Activated CD4-positive, alpha-beta T cell treated with anti-CD3 and anti-CD28 coated beads, Interleukin-2, amount 10 ng/mL, durations not matched to agents 24 days and 14 days (primary cell): ENCODE measurements at regions of chr17 and their contacts with region 1.

Region 1: GRCh38 chr17:65181237-65182061 is 44.3 kb downstream of the RGS9 start:
- DNase-seq: peak; percentile 82
- H3K4me3 Mint-ChIP-seq: peak overlapping the region; percentile 54
- H3K27ac Mint-ChIP-seq: peak overlapping the region; percentile 87
- H3K4me1 Mint-ChIP-seq: peaks cover 73% of the 10 kb centered on the region
- H3K27me3 Mint-ChIP-seq: no peaks in the 10 kb centered on the region

Region 2: DNA sequence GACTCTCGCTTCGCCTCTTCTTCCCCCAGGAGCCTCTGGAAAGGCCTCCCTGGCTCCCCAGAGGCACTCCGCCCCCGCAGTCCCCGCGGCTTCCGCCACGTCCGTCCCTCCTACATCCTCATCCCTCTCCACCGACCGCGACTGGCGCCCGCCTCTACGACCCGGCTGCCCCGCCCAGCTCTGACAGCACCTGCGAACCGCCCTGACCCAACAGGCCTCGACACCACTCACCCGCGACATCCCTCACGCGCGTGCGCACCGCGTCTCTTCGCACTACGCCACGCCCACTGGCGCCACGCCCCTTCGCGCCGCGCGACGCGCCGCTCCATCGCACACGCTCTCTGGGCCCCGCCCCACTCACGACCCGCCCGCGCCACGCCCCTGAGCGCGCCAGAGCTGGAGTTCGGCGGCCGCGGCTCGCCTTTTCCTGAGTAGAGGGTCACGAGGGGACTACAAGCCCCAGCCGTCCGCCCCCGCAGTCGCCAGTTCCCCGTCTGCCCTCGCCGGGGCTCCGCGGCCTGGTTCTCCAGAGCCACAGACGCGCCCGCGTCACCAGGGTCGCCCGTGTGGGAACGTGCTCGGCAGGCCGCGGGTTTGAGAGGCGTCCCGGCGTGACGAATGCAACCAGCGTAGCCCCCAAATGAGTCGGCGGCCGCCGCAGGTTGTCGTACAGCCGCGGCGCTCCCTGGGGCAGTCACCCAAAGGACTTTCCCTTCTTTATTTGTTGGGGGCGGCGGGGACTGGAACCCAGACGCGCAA is 205.9 kb before region 1 on chr17:
- intact Hi-C with region 1: loop called (anchors 2 kb)
- DNase-seq: peak; percentile 100
- H3K4me3 Mint-ChIP-seq: peak overlapping the region; percentile 76
- H3K27ac Mint-ChIP-seq: peak overlapping the region; percentile 93
- H3K4me1 Mint-ChIP-seq: peaks cover 47% of the 10 kb centered on the region
- H3K27me3 Mint-ChIP-seq: no peaks in the 10 kb centered on the region

Region 3: DNA sequence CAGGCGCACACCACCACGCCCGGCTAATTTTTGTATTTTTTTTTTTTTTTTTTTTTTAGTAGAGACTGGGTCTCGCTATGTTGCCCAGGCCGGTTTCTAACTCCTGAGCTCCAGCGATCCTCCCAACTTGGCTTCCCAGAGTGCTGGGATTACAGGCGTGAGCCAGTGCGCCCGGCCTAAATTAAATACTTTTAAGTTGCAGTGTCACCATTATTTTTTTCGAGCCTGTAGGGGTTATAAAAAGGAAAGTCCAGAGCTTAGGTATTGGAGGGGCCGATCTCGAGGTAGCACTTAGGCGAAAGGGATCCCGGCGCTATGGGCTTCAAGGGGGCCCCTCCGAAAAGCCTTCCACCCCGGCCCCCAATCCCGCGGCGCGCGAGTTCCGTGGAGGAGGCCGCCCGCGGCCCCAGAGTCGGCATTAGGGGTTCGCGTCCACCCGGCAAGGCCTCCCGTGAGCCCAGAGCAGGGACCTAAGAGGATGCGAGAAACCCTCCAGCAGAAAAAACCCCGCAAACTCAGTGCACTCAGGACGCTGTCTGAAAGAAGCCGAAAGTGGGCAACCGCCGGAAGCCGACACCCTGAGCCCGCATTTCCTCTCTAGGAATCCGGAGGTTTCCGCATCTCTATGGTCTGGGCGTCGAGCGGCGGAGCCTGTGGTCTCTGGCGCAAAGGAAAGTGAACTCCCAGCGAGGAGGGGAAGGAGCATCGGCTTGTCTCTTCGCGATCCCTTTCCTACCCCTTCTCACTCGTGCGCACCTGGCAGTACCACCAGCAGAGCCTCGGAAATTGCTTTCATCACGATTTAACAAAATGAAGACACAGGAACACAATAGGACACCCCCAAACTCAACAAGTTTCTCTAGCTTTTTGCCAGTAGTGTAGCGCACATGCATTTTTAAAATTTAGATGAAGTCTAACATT is 58.4 kb before region 1 on chr17:
- intact Hi-C with region 1: loop called (anchors 1 kb)
- DNase-seq: peak; percentile 96
- H3K4me3 Mint-ChIP-seq: peak overlapping the region; percentile 86
- H3K27ac Mint-ChIP-seq: peak overlapping the region; percentile 97
- H3K4me1 Mint-ChIP-seq: peaks cover 22% of the 10 kb centered on the region
- H3K27me3 Mint-ChIP-seq: peaks cover 12% of the 10 kb centered on the region

Region 4: DNA sequence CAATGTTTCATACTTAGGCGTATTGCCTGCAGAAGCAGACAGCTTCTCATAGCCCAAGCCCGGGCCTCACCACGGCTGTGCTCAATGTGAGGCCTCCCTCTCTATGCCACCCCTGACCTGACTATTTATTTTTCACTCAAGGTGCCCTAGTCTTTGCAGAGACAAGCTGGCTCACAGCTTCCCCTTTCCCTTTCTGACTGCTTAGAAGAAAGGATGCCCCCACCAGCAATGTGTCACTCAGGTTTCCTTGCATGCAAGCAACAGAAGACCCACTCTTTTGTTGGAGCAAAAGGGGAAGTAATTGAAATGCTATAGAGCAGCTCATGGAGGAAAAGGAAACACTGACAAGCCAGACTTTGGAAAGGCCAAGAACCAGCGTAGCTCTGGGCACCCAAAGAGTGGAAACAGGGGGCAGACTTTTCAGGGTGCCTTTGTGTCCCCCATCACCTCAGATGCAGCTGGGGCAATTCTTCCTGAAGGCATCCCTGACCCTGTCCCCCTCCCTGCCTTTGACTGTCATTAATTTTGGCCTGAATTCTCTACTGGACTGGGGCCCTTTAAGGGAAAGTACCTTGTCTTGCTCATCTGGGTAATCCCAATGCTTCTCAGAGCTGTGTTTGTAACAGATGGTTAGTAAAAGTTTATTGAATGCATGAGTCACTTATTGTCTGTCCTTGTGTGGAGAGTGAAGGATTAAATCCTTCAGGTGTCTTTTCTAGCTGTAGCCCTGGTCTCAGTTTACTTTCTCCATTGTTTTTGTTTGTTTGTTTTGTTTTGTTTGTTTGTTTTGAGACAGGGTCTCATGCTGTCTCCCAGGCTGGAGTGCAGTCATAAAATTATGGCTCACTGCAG is 26.5 kb before region 1 on chr17:
- intact Hi-C with region 1: loop called (anchors 1 kb)
- DNase-seq: no peak
- H3K4me3 Mint-ChIP-seq: no peak overlapping the region
- H3K27ac Mint-ChIP-seq: peak overlapping the region; percentile 36
- H3K4me1 Mint-ChIP-seq: peaks cover 14% of the 10 kb centered on the region
- H3K27me3 Mint-ChIP-seq: peaks cover 12% of the 10 kb centered on the region

Region 5: DNA sequence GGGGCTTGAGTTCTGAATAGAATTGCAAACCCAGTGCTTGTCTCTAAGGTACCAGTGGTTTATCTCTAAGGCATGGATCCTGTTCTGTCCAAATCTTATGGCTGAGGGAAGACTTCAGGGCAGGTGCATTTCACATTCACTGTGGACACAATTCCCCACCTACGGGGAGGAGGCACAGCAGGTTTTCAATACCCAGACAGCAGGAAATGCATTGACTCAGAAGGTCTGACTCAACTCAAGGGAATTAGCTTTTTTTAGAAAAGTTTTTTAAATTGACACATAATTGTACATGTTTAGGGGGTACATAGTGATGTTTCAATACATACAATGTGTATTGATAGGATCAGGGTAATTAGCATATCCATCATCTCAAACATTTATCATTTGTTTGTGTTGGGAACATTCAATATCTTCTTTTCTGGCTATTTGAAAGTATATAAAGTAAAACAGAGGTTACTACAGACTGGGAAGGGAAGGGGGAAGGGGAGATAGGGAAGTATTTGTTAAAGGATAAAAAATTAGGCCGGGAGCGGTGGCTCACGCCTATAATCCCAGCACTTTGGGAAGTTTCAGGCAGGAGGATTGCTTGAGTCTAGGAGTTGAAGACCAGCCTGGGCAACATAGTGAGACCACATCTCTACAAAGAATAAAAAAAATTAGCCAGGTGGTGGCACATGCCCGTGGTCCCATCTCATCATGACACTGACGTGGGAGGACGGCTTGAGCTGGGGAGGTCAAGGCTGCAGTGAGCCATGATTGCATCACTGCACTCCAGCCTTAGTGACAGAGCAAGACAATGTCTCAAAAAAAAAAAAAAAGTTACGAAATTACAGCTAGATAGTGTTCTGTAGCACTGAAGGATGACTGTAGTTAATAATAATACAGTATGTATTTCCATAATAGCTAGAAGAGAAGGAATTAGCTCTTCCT is 10.6 kb after region 1 on chr17:
- intact Hi-C with region 1: loop called (anchors 1 kb)
- DNase-seq: no peak
- H3K4me3 Mint-ChIP-seq: peak overlapping the region; percentile 64
- H3K27ac Mint-ChIP-seq: peak overlapping the region; percentile 79
- H3K4me1 Mint-ChIP-seq: peaks cover 35% of the 10 kb centered on the region
- H3K27me3 Mint-ChIP-seq: no peaks in the 10 kb centered on the region

Region 6: GRCh38 chr17:65231662-65232335 is 50.4 kb after region 1 on chr17:
- intact Hi-C with region 1: loop called (anchors 1 kb)
- DNase-seq: peak; percentile 88
- H3K4me3 Mint-ChIP-seq: no peak overlapping the region
- H3K27ac Mint-ChIP-seq: peak overlapping the region; percentile 75
- H3K4me1 Mint-ChIP-seq: peaks cover 31% of the 10 kb centered on the region
- H3K27me3 Mint-ChIP-seq: peaks cover 23% of the 10 kb centered on the region